CD4-positive, alpha-beta memory T cell (primary cell): ENCODE measurements at regions of chr3 and their contacts with region 1.

Region 1: DNA sequence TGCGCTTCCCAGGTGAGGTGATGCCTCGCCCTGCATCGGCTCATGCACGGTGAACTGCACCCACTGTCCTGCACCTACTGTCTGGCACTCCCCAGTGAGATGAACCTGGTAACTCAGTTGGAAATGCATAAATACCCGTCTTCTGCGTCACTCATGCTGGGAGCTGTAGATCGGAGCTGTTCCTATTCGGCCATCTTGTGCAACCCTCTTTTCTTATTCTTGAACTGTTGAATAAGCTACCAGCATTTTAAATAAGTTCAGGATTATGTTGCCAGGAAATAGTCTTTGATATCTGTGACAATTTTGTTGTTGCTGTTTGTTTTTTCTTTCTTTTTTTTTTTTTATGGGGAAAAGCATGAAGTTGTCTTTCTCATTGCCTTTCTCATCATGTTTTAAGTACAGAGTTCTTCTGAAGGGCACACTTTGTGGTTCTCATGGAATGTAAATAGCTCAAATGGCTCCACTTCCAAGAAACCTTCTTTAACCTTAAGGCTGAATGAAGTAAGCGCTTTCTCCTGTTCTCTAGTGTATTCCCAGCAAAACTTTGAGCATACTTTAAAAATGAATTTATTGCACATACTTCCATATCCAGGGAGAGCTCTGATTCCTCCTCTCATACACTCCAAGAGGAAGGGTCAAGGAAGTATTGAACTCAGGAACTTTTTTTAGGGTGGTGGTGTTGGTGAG is 468.0 kb upstream of the TBL1XR1 start:
- DNase-seq: no peak
- H3K4me3 ChIP-seq: no peak overlapping the region
- H3K4me3 Mint-ChIP-seq: no peak overlapping the region
- H3K27ac ChIP-seq: no peak overlapping the region
- H3K27ac Mint-ChIP-seq: peak overlapping the region in 1 of 7 donors; percentile 54
- H3K4me1 ChIP-seq: no peaks in the 10 kb centered on the region
- H3K4me1 Mint-ChIP-seq: peaks cover 0 to 6% (median 2%) of the 10 kb centered on the region in 4 donors
- H3K27me3 ChIP-seq: no peaks in the 10 kb centered on the region
- H3K27me3 Mint-ChIP-seq: no peaks in the 10 kb centered on the region

Region 2: DNA sequence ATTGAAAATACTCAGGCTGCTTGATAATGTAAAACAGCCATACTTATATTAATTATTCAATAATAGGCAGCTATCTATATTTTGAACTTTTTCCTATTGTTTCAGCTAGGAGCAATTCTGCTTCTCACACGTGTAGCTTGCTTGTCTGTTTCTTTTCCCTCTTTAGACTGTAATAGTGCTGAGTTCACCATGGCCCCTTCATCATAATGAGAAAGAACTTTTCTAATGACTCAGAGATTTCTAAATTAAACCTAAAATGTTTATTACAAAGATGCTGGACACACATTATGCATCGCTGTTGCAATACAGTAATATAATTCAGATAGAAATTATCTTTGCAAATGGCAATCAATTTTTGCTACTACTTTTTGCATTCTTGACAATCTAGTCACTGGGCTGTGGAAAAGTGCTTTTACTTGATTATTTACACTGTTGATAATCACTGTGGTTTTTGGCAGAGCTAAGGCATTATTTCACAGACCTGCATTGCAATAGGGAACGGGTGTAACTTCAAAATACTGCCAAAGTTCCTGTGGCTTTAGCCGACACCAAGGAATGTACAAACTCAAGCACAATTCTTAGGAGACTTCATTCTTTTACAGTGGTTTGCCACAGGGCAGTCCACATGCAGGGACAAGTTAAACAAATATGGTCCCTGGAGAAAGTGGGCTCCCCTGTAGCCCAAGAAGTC is 186.9 kb before region 1 on chr3:
- CTCF ChIA-PET with region 1: no interaction called
- POLR2A ChIA-PET with region 1: no interaction called
- intact Hi-C with region 1: no loop called
- DNase-seq: no peak
- H3K4me3 ChIP-seq: no peak overlapping the region
- H3K4me3 Mint-ChIP-seq: no peak overlapping the region
- H3K27ac ChIP-seq: no peak overlapping the region
- H3K27ac Mint-ChIP-seq: no peak overlapping the region
- H3K4me1 ChIP-seq: no peaks in the 10 kb centered on the region
- H3K4me1 Mint-ChIP-seq: peaks cover 0 to 3% (median 1%) of the 10 kb centered on the region in 4 donors
- H3K27me3 ChIP-seq: no peaks in the 10 kb centered on the region
- H3K27me3 Mint-ChIP-seq: peaks cover 0 to 1% of the 10 kb centered on the region in 2 donors

Region 3: GRCh38 chr3:177646749-177647148 is 18.5 kb before region 1 on chr3:
- CTCF ChIA-PET with region 1: interaction called, 12 read pairs
- POLR2A ChIA-PET with region 1: no interaction called
- intact Hi-C with region 1: no loop called
- DNase-seq: peak; percentile 26 to 67 (median 38)
- H3K4me3 ChIP-seq: no peak overlapping the region
- H3K4me3 Mint-ChIP-seq: peak overlapping the region in 6 of 8 donors; percentile 37 to 82 (median 59)
- H3K27ac ChIP-seq: no peak overlapping the region
- H3K27ac Mint-ChIP-seq: peak overlapping the region; percentile 70 to 88 (median 80)
- H3K4me1 ChIP-seq: peaks cover 73% of the 10 kb centered on the region
- H3K4me1 Mint-ChIP-seq: peaks cover 55 to 70% (median 63%) of the 10 kb centered on the region in 4 donors
- H3K27me3 ChIP-seq: no peaks in the 10 kb centered on the region
- H3K27me3 Mint-ChIP-seq: no peaks in the 10 kb centered on the region

Region 4: GRCh38 chr3:177687291-177687690 is 22.0 kb after region 1 on chr3:
- CTCF ChIA-PET with region 1: no interaction called
- POLR2A ChIA-PET with region 1: no interaction called
- intact Hi-C with region 1: no loop called
- DNase-seq: no peak
- H3K4me3 ChIP-seq: no peak overlapping the region
- H3K4me3 Mint-ChIP-seq: no peak overlapping the region
- H3K27ac ChIP-seq: no peak overlapping the region
- H3K27ac Mint-ChIP-seq: peak overlapping the region in 1 of 7 donors; percentile 47
- H3K4me1 ChIP-seq: no peaks in the 10 kb centered on the region
- H3K4me1 Mint-ChIP-seq: peaks cover 0 to 6% (median 4%) of the 10 kb centered on the region in 4 donors
- H3K27me3 ChIP-seq: no peaks in the 10 kb centered on the region
- H3K27me3 Mint-ChIP-seq: no peaks in the 10 kb centered on the region

Region 5: DNA sequence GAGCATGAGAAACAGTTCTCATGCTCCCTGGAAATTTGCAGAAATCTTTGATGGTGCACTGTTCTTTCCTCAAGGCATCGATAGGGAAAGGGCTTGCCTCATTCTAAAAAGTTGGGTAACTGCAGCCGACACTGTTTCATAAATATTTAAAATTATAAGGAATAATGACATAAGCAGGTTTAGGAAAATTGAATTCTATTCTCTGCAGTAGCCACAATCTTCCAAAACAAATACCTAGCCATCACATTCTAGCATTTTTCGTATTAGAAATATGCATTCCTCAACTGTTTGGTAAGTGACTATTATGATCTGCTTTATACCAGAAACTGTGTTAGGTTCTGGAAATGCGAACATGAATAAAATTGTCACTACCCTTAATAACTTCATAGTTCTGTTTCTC is 371.5 kb after region 1 on chr3:
- CTCF ChIA-PET with region 1: no interaction called
- POLR2A ChIA-PET with region 1: no interaction called
- intact Hi-C with region 1: no loop called
- DNase-seq: no peak
- H3K4me3 ChIP-seq: no peak overlapping the region
- H3K4me3 Mint-ChIP-seq: no peak overlapping the region
- H3K27ac ChIP-seq: no peak overlapping the region
- H3K27ac Mint-ChIP-seq: no peak overlapping the region
- H3K4me1 ChIP-seq: no peaks in the 10 kb centered on the region
- H3K4me1 Mint-ChIP-seq: no peaks in the 10 kb centered on the region
- H3K27me3 ChIP-seq: no peaks in the 10 kb centered on the region
- H3K27me3 Mint-ChIP-seq: peaks cover 1 to 7% of the 10 kb centered on the region in 2 donors